AG04449 (cell line): ENCODE measurements at regions of chr17 and their contacts with region 1.

Region 1: GRCh38 chr17:57480438-57481196 is 224.3 kb downstream of the MSI2 start:
- DNase-seq: peak; percentile 52
- H3K4me3 ChIP-seq: no peak overlapping the region
- CTCF ChIP-seq: no peak

Region 2: GRCh38 chr17:57391076-57391825 is 89.4 kb before region 1 on chr17:
- CTCF ChIA-PET with region 1: no interaction called
- POLR2A ChIA-PET with region 1: no interaction called
- DNase-seq: no peak
- H3K4me3 ChIP-seq: no peak overlapping the region
- CTCF ChIP-seq: no peak

Region 3: DNA sequence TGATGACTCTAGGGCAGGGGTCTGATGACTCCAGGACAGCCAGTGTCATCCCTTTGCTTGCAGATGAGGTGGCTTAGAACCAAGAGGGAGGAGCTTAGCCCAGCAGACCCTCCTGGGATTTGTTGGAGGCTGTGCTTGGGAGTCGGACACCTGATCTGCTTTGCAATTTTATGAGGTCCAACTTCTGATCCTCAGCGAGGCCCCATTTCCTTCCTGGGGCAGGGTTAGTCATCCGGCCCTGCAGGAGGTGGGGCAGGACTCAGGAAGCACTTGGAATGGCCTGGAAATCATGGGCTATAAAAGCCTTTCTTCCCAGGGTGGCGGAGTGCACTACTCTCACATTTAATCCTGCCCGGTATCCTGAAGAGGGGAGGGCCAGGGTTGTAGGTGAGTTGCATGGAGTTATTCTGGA is 55.8 kb before region 1 on chr17:
- CTCF ChIA-PET with region 1: no interaction called
- POLR2A ChIA-PET with region 1: no interaction called
- DNase-seq: no peak
- H3K4me3 ChIP-seq: no peak overlapping the region
- CTCF ChIP-seq: no peak

Region 4: DNA sequence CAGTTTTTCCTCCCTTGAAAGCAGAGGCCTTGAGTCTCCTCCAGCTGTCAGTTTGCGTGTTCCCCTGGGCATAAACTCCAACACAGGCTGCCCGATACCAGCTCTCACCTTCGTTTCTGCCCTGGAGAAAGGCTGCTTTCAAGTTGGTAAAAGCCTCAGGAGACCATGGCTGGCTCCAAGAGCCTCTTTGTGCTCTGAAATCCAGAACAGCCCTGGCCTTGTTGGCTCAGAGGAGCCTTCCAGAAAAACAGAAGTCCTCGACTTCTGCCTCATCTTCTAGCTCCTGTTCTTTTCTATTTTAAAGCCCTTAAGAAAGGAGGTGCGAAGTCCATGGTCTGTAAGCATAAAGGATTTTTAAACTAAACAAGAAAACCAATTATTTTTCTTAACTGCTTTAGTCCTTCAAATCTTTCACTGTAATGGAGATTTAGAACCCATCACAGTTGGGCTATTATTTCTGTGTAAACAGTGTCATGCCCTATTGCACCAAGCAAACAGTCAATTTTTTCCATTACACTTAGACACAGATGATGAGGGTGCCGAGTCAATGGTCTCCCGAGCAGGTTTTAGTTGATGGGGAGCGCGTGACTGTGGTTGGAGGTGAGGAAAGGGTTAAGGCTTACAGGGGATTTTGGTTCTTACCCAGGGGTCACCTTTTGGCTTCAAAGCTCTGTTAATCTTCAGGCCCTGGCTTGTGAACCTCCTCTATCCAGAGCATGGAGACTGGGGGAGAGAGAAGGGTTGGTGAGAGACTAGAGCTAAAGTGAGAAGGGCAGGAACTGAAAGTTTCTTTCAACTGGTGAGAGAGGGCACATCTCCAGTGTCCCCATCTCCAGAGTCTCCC is 11.5 kb before region 1 on chr17:
- CTCF ChIA-PET with region 1: interaction called, 12 read pairs
- POLR2A ChIA-PET with region 1: interaction called, 24 read pairs
- DNase-seq: no peak
- H3K4me3 ChIP-seq: no peak overlapping the region
- CTCF ChIP-seq: no peak

Region 5: GRCh38 chr17:57499648-57500049 is 19.0 kb after region 1 on chr17:
- CTCF ChIA-PET with region 1: no interaction called
- POLR2A ChIA-PET with region 1: no interaction called
- DNase-seq: no peak
- H3K4me3 ChIP-seq: no peak overlapping the region
- CTCF ChIP-seq: peak; percentile 23

Region 6: DNA sequence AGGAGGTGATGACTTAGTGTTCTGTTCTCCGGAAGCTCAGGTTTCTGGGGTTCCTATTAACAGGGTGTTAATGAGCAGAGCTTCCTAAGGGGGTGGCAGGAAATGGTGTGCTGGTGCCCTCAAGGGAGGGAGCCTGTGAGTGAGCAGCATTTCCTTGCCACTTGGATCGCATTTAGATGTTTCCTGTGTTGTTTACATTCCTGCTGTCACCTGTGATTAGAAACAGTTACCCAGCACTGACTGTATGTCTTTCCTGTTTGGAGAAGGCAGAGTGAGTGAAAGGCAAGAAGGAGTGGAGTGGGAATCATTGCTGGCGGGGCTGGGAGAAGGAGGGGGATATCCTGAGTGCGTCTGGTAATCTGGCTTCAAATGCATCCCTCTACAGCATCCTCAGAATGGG is 49.9 kb after region 1 on chr17:
- CTCF ChIA-PET with region 1: no interaction called
- POLR2A ChIA-PET with region 1: no interaction called
- DNase-seq: no peak
- H3K4me3 ChIP-seq: no peak overlapping the region
- CTCF ChIP-seq: no peak